Endothelial cell of umbilical vein (primary cell): ENCODE measurements at regions of chr3 and their contacts with region 1.

Region 1: DNA sequence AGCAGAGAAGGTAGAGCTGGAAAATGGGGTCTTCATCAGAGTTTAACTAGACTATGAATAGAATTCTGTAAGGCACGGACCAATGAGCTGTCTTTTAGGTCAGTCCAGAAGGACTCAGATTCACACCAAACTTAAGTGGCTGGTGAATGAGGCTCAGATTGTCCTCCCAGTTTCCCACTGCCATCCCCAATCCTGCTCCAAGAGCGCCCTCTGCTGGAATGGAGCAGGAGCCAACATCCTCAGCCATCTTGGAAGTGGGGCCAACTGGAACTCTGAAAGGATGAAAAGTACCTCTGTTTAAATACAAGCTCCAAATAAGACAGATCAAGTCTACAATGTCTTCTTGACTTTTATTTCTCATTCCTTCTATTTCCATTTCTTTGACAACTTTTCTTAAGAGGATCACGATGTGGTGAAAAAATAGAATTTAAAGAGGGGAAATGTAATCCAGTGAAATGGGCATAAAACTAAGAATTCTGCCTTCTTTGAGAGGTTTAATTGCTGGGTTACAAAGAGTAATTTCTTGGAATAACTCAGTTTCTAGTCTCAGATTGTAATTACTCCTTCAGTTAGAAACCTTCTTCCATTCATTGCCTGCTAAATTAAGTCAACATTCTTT is 217.1 kb upstream of the TPRG1 start:
- DNase-seq: peak; percentile 84
- H3K4me3 ChIP-seq: no peak overlapping the region
- H3K27ac ChIP-seq: no peak overlapping the region
- H3K4me1 ChIP-seq: peaks cover 21% of the 10 kb centered on the region
- H3K27me3 ChIP-seq: no peaks in the 10 kb centered on the region
- CTCF ChIP-seq: peak; percentile 84 to 95
- POLR2A ChIP-seq: no peak

Region 2: GRCh38 chr3:188037216-188037718 is 917.4 kb before region 1 on chr3:
- CTCF ChIA-PET with region 1: no interaction called
- POLR2A ChIA-PET with region 1: no interaction called
- dilution Hi-C with region 1: no loop called
- intact Hi-C with region 1: loop called (anchors 1 kb)
- DNase-seq: peak; percentile 43
- H3K4me3 ChIP-seq: no peak overlapping the region
- H3K27ac ChIP-seq: no peak overlapping the region
- H3K4me1 ChIP-seq: no peaks in the 10 kb centered on the region
- H3K27me3 ChIP-seq: peaks cover 0 to 2% of the 10 kb centered on the region in 2 experiments
- CTCF ChIP-seq: peak in 1 of 2 donors; percentile 44
- POLR2A ChIP-seq: no peak

Region 3: GRCh38 chr3:188370081-188370830 is 584.4 kb before region 1 on chr3:
- CTCF ChIA-PET with region 1: interaction called, 18 read pairs
- POLR2A ChIA-PET with region 1: no interaction called
- dilution Hi-C with region 1: no loop called
- intact Hi-C with region 1: no loop called
- DNase-seq: no peak
- H3K4me3 ChIP-seq: no peak overlapping the region
- H3K27ac ChIP-seq: no peak overlapping the region
- H3K4me1 ChIP-seq: peaks cover 26% of the 10 kb centered on the region
- H3K27me3 ChIP-seq: no peaks in the 10 kb centered on the region
- CTCF ChIP-seq: no peak
- POLR2A ChIP-seq: no peak

Region 4: GRCh38 chr3:188664795-188665194 is 289.9 kb before region 1 on chr3:
- CTCF ChIA-PET with region 1: no interaction called
- POLR2A ChIA-PET with region 1: no interaction called
- dilution Hi-C with region 1: no loop called
- intact Hi-C with region 1: loop called (anchors 5 kb)
- DNase-seq: peak; percentile 18
- H3K4me3 ChIP-seq: no peak overlapping the region
- H3K27ac ChIP-seq: no peak overlapping the region
- H3K4me1 ChIP-seq: peaks cover 3% of the 10 kb centered on the region
- H3K27me3 ChIP-seq: no peaks in the 10 kb centered on the region
- CTCF ChIP-seq: peak; percentile 29 to 30
- POLR2A ChIP-seq: no peak

Region 5: GRCh38 chr3:188788621-188789081 is 166.0 kb before region 1 on chr3:
- CTCF ChIA-PET with region 1: interaction called, 5 read pairs
- POLR2A ChIA-PET with region 1: no interaction called
- dilution Hi-C with region 1: no loop called
- intact Hi-C with region 1: loop called (anchors 1 kb)
- DNase-seq: peak; percentile 90
- H3K4me3 ChIP-seq: no peak overlapping the region
- H3K27ac ChIP-seq: peak overlapping the region; percentile 85
- H3K4me1 ChIP-seq: peaks cover 19% of the 10 kb centered on the region
- H3K27me3 ChIP-seq: no peaks in the 10 kb centered on the region
- CTCF ChIP-seq: no peak
- POLR2A ChIP-seq: no peak

Region 6: GRCh38 chr3:188978421-188979171 is 23.9 kb after region 1 on chr3:
- CTCF ChIA-PET with region 1: no interaction called
- POLR2A ChIA-PET with region 1: no interaction called
- dilution Hi-C with region 1: no loop called
- intact Hi-C with region 1: no loop called
- DNase-seq: no peak
- H3K4me3 ChIP-seq: no peak overlapping the region
- H3K27ac ChIP-seq: no peak overlapping the region
- H3K4me1 ChIP-seq: no peaks in the 10 kb centered on the region
- H3K27me3 ChIP-seq: peaks cover 12 to 24% of the 10 kb centered on the region in 2 experiments
- CTCF ChIP-seq: no peak
- POLR2A ChIP-seq: no peak

Region 7: DNA sequence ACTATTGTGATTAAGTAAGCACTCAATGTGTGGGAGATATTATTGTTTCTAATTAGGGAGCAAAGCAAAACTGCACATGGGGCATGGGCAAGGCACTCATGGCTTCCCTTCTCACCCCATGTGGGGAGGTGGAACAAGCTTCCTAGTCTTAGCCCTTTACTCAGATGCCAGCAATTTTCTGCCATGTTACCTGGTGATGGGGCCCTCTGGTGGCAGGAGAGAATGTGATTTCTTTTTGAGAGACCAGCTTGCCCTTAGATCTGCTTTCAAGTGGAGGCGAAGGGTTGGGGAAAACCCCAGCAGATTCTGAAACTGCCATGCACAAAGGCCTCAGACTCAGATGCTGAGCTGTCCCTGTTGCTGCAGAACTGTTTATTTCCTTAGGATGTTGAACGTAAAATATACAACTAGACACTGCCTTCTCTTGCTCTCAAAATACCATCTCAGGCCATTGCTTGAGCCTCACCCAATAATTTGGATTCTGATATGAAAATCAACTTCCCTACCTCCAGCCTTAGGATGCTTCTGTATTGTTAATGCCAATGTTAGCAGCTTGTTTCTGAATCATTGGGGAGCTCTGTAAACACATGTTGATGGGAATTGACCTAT is 86.9 kb after region 1 on chr3:
- CTCF ChIA-PET with region 1: interaction called, 25 read pairs
- POLR2A ChIA-PET with region 1: no interaction called
- dilution Hi-C with region 1: no loop called
- intact Hi-C with region 1: loop called (anchors 2 kb)
- DNase-seq: peak; percentile 67
- H3K4me3 ChIP-seq: no peak overlapping the region
- H3K27ac ChIP-seq: no peak overlapping the region
- H3K4me1 ChIP-seq: no peaks in the 10 kb centered on the region
- H3K27me3 ChIP-seq: peaks cover 0 to 3% of the 10 kb centered on the region in 2 experiments
- CTCF ChIP-seq: peak; percentile 45 to 56
- POLR2A ChIP-seq: no peak